Endothelial cell of umbilical vein (primary cell): ENCODE measurements at regions of chrX and their contacts with region 1.

Region 1: DNA sequence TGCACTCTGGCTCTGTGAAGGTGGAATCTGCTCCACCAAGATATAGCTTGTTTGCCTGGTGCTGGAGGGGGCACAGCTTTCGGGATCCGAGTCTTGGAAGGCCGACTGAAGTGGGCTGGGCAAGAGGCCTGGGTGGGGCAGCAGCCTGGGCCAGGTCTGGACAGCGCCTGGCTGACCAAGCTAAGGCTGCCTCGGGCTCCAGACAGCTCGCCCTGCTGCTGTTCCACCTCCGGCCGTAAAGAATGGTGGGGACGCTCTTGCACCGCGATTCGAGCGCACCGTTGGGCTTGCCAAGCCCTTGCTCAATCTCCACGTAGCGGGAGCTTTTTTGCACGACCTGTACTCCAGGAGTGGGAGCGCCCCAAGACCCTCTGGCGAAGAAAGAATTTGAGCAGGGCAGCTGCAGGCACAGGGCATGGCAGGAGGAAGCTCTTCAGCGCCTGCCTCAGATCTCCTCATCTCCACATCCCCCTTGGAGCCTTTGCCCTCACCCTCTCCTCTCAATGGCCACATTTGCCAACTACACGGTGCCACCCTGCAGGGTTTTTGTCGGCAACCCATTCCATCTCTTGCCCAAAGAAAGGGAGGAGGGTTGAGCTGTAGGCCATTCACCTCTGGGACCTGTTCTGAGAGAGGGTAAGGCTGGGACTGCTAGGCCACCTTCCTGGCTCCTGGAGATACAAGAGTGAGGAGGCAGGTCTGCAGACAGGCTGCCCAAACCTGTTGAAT is 18.9 kb downstream of the CNGA2 start:
- DNase-seq: peak; percentile 49
- H3K4me3 ChIP-seq: no peak overlapping the region
- H3K27ac ChIP-seq: no peak overlapping the region
- H3K4me1 ChIP-seq: no peaks in the 10 kb centered on the region
- H3K27me3 ChIP-seq: no peaks in the 10 kb centered on the region
- CTCF ChIP-seq: peak; percentile 55 to 81
- POLR2A ChIP-seq: no peak

Region 2: GRCh38 chrX:151801993-151802392 is 48.5 kb after region 1 on chrX:
- CTCF ChIA-PET with region 1: interaction called, 11 read pairs
- POLR2A ChIA-PET with region 1: no interaction called
- dilution Hi-C with region 1: no loop called
- intact Hi-C with region 1: no loop called
- DNase-seq: peak; percentile 8
- H3K4me3 ChIP-seq: no peak overlapping the region
- H3K27ac ChIP-seq: no peak overlapping the region
- H3K4me1 ChIP-seq: no peaks in the 10 kb centered on the region
- H3K27me3 ChIP-seq: no peaks in the 10 kb centered on the region
- CTCF ChIP-seq: peak in 1 of 2 donors; percentile 22
- POLR2A ChIP-seq: no peak

Region 3: GRCh38 chrX:151825927-151826481 is 72.5 kb after region 1 on chrX:
- CTCF ChIA-PET with region 1: interaction called, 16 read pairs
- POLR2A ChIA-PET with region 1: no interaction called
- dilution Hi-C with region 1: no loop called
- intact Hi-C with region 1: no loop called
- DNase-seq: peak; percentile 52
- H3K4me3 ChIP-seq: no peak overlapping the region
- H3K27ac ChIP-seq: no peak overlapping the region
- H3K4me1 ChIP-seq: no peaks in the 10 kb centered on the region
- H3K27me3 ChIP-seq: no peaks in the 10 kb centered on the region
- CTCF ChIP-seq: no peak
- POLR2A ChIP-seq: no peak

Region 4: GRCh38 chrX:152632445-152633097 is 879.1 kb after region 1 on chrX:
- CTCF ChIA-PET with region 1: interaction called, 190 read pairs
- POLR2A ChIA-PET with region 1: no interaction called
- dilution Hi-C with region 1: no loop called
- intact Hi-C with region 1: loop called (anchors 1 kb)
- DNase-seq: peak; percentile 37
- H3K4me3 ChIP-seq: no peak overlapping the region
- H3K27ac ChIP-seq: no peak overlapping the region
- H3K4me1 ChIP-seq: no peaks in the 10 kb centered on the region
- H3K27me3 ChIP-seq: peaks cover 6 to 7% of the 10 kb centered on the region in 2 experiments
- CTCF ChIP-seq: peak; percentile 58 to 63
- POLR2A ChIP-seq: no peak

Region 5: DNA sequence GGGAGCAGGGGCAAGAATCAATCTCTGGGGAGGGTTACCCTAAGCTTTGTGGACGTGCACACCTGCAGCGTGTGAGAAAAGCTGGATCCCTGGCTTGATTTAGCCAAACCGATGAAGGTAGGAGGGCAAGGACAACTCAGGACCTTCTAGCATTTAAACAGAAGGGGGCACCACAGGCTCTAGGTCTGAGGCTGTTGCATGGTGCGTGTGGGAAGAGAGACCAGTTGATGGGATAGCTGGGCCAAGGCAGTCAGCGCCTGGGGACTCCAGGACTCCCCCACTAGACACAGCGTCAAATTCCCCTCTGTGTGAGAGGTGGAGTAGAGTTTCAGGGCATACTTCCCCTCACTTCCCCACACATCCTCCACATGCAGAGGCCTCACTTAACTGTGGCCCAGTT is 888.5 kb after region 1 on chrX:
- CTCF ChIA-PET with region 1: interaction called, 93 read pairs
- POLR2A ChIA-PET with region 1: no interaction called
- dilution Hi-C with region 1: no loop called
- intact Hi-C with region 1: no loop called
- DNase-seq: peak; percentile 1
- H3K4me3 ChIP-seq: no peak overlapping the region
- H3K27ac ChIP-seq: no peak overlapping the region
- H3K4me1 ChIP-seq: no peaks in the 10 kb centered on the region
- H3K27me3 ChIP-seq: peaks cover 4 to 9% of the 10 kb centered on the region in 2 experiments
- CTCF ChIP-seq: peak in 1 of 2 donors; percentile 4
- POLR2A ChIP-seq: no peak

Region 6: GRCh38 chrX:152821145-152821765 is 1067.8 kb after region 1 on chrX:
- CTCF ChIA-PET with region 1: interaction called, 23 read pairs
- POLR2A ChIA-PET with region 1: no interaction called
- dilution Hi-C with region 1: no loop called
- intact Hi-C with region 1: loop called (anchors 1 kb)
- DNase-seq: peak; percentile 31
- H3K4me3 ChIP-seq: no peak overlapping the region
- H3K27ac ChIP-seq: no peak overlapping the region
- H3K4me1 ChIP-seq: peaks cover 4% of the 10 kb centered on the region
- H3K27me3 ChIP-seq: peaks cover 1 to 3% of the 10 kb centered on the region in 2 experiments
- CTCF ChIP-seq: peak; percentile 51 to 59
- POLR2A ChIP-seq: no peak